Ascending aorta (tissue), 2 donors: ENCODE measurements at regions of chrX and their contacts with region 1.

Region 1: GRCh38 chrX:131704136-131704695 is 160.3 kb downstream of the OR13H1 start:
- DNase-seq: peak; percentile 29 to 94
- H3K4me3 ChIP-seq: peak overlapping the region; percentile 46 to 63
- H3K27ac ChIP-seq: peak overlapping the region; percentile 23 to 54
- H3K4me1 ChIP-seq: no peaks in the 10 kb centered on the region
- H3K27me3 ChIP-seq: no peaks in the 10 kb centered on the region
- CTCF ChIP-seq: peak; percentile 46 to 64 (median 58)

Region 2: DNA sequence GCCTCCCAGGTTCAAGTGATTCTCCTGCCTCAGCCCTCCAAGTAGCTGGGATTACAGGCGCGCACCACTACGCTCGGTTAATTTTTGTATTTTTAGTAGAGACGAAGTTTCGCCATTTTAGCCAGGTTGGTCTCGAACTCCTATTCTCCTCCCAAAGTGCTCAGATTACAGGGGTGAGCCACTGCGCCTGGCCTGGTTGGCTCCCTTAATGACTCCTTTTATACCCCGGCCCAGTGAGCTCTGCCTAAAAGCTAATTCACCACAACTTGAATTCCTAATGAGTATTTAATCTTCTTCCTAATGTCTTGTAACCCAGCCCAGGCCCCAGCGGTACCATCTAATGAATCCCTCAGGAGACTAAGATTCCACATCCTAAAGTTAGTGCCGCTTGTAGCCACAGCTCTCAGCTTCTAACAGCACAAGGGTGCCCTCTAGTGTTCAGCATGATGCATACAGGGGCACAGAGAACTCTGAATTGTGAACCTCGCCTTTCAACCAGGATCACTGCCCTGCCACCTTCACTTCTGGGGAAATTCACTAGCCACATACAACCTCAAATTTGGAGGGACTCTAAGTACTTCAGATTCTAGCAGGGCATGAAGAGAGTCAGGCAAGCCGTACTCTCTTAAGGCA is 70.8 kb before region 1 on chrX:
- intact Hi-C with region 1: no loop called
- DNase-seq: peak in 1 of 2 donors; percentile 65
- H3K4me3 ChIP-seq: no peak overlapping the region
- H3K27ac ChIP-seq: no peak overlapping the region
- H3K4me1 ChIP-seq: no peaks in the 10 kb centered on the region
- H3K27me3 ChIP-seq: no peaks in the 10 kb centered on the region
- CTCF ChIP-seq: peak; percentile 49 to 84 (median 76)

Region 3: DNA sequence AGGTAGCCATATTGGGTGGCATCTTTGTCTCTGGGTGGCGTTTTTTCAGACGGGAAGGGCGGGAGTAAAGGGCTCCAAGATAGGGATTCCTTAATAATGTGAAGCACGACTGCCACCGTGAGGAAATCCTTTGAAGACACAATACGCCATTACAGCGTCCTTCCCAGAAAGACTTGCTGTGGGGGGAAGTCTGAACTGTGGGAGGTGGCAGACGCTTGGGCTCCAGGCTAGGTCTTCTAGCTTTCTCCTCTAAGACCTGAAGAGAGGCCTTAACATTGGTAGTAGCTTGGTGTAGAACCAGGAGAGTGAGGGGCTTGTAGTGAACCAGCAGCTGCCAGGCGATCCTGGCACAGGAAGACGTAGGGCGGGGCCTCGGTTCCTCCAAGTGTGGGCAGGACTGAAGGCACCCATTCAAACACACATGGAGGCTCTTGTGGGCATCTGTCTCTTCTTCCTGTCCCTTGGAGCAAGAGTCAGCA is 36.9 kb after region 1 on chrX:
- intact Hi-C with region 1: loop called (anchors 2 kb)
- DNase-seq: peak; percentile 52 to 91
- H3K4me3 ChIP-seq: peak overlapping the region; percentile 48 to 65
- H3K27ac ChIP-seq: peak overlapping the region; percentile 69 to 82
- H3K4me1 ChIP-seq: no peaks in the 10 kb centered on the region
- H3K27me3 ChIP-seq: no peaks in the 10 kb centered on the region
- CTCF ChIP-seq: peak; percentile 31 to 46 (median 38)

Region 4: DNA sequence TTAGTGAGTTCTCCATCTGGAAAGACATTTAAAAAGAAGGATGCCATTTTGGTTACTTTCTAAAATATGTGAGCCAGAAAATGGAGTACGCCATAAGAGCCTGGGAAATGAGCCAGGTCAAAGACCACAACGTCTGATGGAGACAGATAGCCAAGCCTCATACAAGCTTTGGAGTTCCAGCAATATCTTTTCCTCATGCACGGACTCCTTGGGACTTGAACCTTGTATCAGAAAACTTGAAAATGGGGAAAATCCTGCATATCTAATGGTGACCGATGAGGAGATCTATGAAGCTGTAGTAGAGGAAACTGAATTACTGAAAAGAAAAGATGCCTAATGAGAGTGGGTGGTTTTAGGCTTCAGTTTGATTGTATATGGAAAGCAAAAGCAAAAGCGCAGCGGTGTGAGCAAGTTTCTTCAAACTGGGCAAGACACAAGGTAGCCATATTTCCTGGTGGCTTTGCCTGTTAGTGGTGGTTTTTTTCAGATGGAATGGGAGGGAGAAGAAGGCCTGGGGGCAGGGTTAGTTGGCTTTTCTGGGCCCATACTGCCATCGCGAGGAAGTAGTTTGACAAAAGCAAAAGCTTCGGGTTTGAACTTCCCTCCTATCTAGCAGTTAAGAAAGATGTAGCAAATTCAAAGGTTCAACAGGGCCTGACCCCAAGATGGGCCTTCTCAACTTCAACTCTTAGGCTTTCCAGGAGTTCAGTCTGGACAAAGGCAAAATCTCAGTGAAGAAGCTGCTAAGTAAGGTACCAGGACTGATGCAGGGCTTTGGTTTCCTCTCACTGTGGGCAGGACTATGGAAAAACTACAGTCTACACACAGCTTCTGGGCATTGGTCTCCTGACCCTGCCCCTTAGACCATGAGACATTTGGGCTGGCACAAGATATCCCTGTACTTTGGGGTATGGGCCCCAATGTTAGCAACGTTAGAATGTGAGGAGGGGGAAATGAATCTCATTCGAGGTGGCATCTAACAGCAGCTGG is 108.9 kb after region 1 on chrX:
- intact Hi-C with region 1: loop called (anchors 10 kb)
- DNase-seq: peak; percentile 39 to 88
- H3K4me3 ChIP-seq: peak overlapping the region; percentile 42 to 68
- H3K27ac ChIP-seq: peak overlapping the region; percentile 72 to 73
- H3K4me1 ChIP-seq: no peaks in the 10 kb centered on the region
- H3K27me3 ChIP-seq: no peaks in the 10 kb centered on the region
- CTCF ChIP-seq: peak; percentile 16 to 73 (median 56)

Region 5: DNA sequence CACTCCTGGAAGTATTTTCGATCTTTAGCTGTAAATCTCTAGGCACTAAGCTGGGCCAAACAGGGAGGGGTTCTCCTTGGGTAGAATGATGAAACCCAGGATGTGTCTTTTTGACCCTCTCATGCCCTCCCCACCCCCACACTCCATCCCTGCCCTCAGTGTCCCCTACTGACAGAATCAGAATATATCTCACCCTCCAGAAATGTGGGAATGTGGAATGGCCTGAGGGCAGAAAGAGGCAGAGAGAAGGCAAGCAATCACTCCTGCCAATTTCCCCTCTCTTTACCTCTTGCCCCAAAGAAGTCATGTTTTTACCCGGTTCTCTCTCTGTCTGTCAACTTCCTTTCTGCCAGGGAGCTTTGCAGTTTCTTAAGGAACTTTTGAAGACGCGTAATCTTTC is 480.6 kb after region 1 on chrX:
- intact Hi-C with region 1: no loop called
- DNase-seq: no peak
- H3K4me3 ChIP-seq: no peak overlapping the region
- H3K27ac ChIP-seq: no peak overlapping the region
- H3K4me1 ChIP-seq: no peaks in the 10 kb centered on the region
- H3K27me3 ChIP-seq: no peaks in the 10 kb centered on the region
- CTCF ChIP-seq: no peak